Activated T-helper 1 cell treated with anti-CD3 and anti-CD28 coated beads, Interleukin-12 subunit alpha, Interleukin-12 subunit beta, Interleukin-2, Interleukin-4 antibody, amounts not matched to agents 30 ng/mL and 10 ng/mL and 1 ng/mL, durations not matched to agents 14 hours and 24 hours and 36 hours (primary cell): ENCODE measurements at regions of chr15 and their contacts with region 1.

Region 1: DNA sequence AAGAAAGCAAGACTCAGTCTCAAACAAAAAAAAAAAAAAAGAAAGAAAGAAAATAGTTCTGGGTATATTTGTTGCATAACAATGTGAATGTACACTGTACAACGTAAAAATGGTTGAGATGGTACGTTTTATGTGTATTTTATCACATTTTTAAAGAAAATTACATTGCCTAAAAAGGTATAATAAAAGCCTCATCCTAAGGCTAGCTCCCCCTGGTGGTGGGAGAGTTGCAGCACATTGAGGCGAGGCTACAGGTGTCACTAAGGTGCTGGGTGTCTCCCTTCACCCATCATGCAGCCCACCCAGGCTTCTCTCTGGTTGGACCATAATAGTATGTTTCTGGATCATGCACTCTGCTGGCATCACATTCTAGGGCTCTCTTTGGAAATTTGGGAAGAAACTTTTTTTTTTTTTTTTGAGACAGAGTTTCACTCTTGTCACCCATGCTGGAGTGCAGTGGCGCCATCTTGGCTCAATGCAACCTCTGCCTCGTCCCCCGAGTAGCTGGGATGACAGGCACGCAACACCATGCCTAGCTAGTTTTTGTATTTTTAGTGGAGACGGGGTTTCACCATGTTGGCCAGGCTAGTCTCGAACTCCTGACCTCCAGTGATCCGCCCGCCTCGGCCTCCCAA is 12.4 kb upstream of the RAB11A start:
- DNase-seq: peak; percentile 70
- H3K4me3 Mint-ChIP-seq: no peak overlapping the region
- H3K27ac Mint-ChIP-seq: no peak overlapping the region
- H3K4me1 Mint-ChIP-seq: no peaks in the 10 kb centered on the region
- H3K27me3 Mint-ChIP-seq: peaks cover 6% of the 10 kb centered on the region

Region 2: GRCh38 chr15:65832549-65833364 is 24.2 kb before region 1 on chr15:
- intact Hi-C with region 1: loop called (anchors 2 kb)
- DNase-seq: peak; percentile 50
- H3K4me3 Mint-ChIP-seq: peak overlapping the region; percentile 77
- H3K27ac Mint-ChIP-seq: peak overlapping the region; percentile 96
- H3K4me1 Mint-ChIP-seq: peaks cover 54% of the 10 kb centered on the region
- H3K27me3 Mint-ChIP-seq: no peaks in the 10 kb centered on the region